Activated CD4-positive, alpha-beta memory T cell treated with anti-CD3 and anti-CD28 coated beads for 36 hours (primary cell): ENCODE measurements at regions of chr3 and their contacts with region 1.

Region 1: DNA sequence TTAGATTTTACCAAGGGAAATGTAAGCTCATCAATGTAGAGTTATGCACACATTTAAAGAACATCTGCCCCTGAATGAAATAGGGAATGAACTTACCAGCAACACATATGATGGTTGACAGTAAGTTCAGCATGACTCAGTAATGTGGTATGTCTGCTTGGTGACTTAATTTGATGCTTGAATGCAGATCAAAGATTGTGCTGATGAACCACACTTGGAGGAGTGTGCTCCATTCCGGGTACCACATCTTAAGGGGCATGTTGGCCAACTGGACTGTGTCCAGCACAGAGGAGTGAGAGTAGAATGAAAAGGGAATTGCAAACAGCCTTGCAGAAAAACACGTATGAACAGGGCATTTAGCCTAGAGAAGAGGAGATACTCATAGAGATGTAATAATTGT is 171.0 kb upstream of the RARB start:
- DNase-seq: no peak
- H3K4me3 Mint-ChIP-seq: no peak overlapping the region
- H3K27ac Mint-ChIP-seq: no peak overlapping the region
- H3K4me1 Mint-ChIP-seq: no peaks in the 10 kb centered on the region
- H3K27me3 Mint-ChIP-seq: no peaks in the 10 kb centered on the region

Region 2: GRCh38 chr3:25281041-25281731 is 24.2 kb after region 1 on chr3:
- CTCF ChIA-PET with region 1: no interaction called
- POLR2A ChIA-PET with region 1: no interaction called
- intact Hi-C with region 1: loop called (anchors 1 kb)
- DNase-seq: no peak
- H3K4me3 Mint-ChIP-seq: no peak overlapping the region
- H3K27ac Mint-ChIP-seq: no peak overlapping the region
- H3K4me1 Mint-ChIP-seq: no peaks in the 10 kb centered on the region
- H3K27me3 Mint-ChIP-seq: no peaks in the 10 kb centered on the region

Region 3: DNA sequence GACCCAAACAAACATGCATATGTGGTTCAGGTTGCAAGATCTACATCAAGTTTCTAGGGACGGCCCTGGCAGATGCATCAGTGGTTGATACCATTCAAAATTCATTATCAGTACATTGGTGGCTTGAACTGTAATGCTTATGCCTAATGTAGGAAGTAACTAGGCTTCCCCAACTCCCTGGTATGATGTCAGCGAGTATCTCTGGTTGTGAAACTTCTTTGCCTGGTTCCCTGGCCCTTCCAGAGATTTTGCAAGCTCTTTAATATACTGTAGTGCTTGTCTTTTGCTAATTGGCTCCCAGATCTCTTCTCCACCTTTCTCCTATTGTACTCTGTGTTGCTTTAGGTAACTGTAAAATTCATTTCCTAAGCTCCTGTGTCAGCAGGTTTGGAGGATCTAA is 56.3 kb after region 1 on chr3:
- CTCF ChIA-PET with region 1: no interaction called
- POLR2A ChIA-PET with region 1: no interaction called
- intact Hi-C with region 1: no loop called
- DNase-seq: no peak
- H3K4me3 Mint-ChIP-seq: no peak overlapping the region
- H3K27ac Mint-ChIP-seq: no peak overlapping the region
- H3K4me1 Mint-ChIP-seq: no peaks in the 10 kb centered on the region
- H3K27me3 Mint-ChIP-seq: no peaks in the 10 kb centered on the region

Region 4: DNA sequence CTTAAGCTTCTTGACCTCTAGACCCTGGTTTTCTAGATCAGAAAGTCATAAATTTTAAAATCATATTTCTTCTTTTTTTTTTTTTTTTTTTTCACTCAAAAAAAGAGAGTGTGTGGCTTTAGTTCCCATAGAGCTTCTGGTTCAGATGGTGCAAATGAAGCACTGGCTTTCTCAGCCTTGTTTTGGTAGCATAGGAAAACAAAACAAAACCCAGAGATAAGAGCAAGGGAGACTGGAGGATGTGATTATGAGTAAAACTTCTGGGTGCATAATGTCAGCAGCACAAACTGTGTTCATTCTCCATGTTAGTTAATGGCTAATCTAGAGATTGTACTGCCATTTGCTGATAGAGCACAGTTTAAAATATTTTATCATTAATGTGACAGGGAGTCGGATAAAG is 226.4 kb after region 1 on chr3:
- CTCF ChIA-PET with region 1: no interaction called
- POLR2A ChIA-PET with region 1: no interaction called
- intact Hi-C with region 1: no loop called
- DNase-seq: no peak
- H3K4me3 Mint-ChIP-seq: no peak overlapping the region
- H3K27ac Mint-ChIP-seq: no peak overlapping the region
- H3K4me1 Mint-ChIP-seq: no peaks in the 10 kb centered on the region
- H3K27me3 Mint-ChIP-seq: peaks cover 3% of the 10 kb centered on the region